Prostate gland (tissue), 2 donors: ENCODE measurements at regions of chr12 and their contacts with region 1.

Region 1: GRCh38 chr12:118061011-118061875 is at the start of gene WSB2:
- DNase-seq: peak; percentile 70
- H3K4me3 ChIP-seq: peak within 1 kb of the TSS; percentile 81 to 89
- H3K27ac ChIP-seq: peak within 1 kb of the TSS; percentile 99
- H3K4me1 ChIP-seq: no peaks in the 10 kb centered on the region
- H3K27me3 ChIP-seq: no peaks in the 10 kb centered on the region
- CTCF ChIP-seq: no peak
- POLR2A ChIP-seq: no peak
- total RNA-seq, gene WSB2: 41.3 to 99.2 TPM

Region 2: DNA sequence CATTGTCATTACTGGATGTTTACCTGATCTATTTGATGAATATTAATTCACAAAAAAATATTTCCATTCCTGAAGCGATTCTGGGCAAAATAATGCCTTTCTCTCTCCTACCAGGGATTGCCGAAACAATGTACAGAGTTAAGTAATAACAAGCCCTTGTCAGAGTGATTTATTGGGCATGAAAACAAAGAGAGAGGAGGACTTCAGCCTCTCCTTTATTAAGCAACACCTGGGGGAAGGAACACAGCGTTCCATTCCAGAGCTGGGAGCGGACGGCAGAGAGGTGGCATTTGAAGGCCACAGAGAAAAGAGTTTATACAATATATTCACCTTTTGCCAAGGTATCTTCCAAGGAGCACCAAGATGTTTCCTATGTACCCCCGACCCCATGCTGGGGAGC is 258.2 kb before region 1 on chr12:
- intact Hi-C with region 1: no loop called
- DNase-seq: peak; percentile 92
- H3K4me3 ChIP-seq: no peak overlapping the region
- H3K27ac ChIP-seq: peak overlapping the region; percentile 66 to 80
- H3K4me1 ChIP-seq: peaks cover 3% of the 10 kb centered on the region
- H3K27me3 ChIP-seq: no peaks in the 10 kb centered on the region
- CTCF ChIP-seq: no peak
- POLR2A ChIP-seq: no peak

Region 3: GRCh38 chr12:118103604-118104382 is 42.5 kb after region 1 on chr12 and contains the start of gene VSIG10:
- intact Hi-C with region 1: loop called (anchors 5 kb)
- DNase-seq: peak; percentile 70
- H3K4me3 ChIP-seq: peak within 1 kb of the TSS; percentile 66 to 81
- H3K27ac ChIP-seq: peak within 1 kb of the TSS; percentile 83 to 89
- H3K4me1 ChIP-seq: no peaks in the 10 kb centered on the region
- H3K27me3 ChIP-seq: no peaks in the 10 kb centered on the region
- CTCF ChIP-seq: peak in 1 of 4 experiments; percentile 8
- POLR2A ChIP-seq: peak; percentile 81
- total RNA-seq, gene VSIG10: 39.8 to 49.5 TPM

Region 4: GRCh38 chr12:118900993-118901392 is 839.8 kb after region 1 on chr12:
- intact Hi-C with region 1: no loop called
- DNase-seq: no peak
- H3K4me3 ChIP-seq: no peak overlapping the region
- H3K27ac ChIP-seq: no peak overlapping the region
- H3K4me1 ChIP-seq: no peaks in the 10 kb centered on the region
- H3K27me3 ChIP-seq: no peaks in the 10 kb centered on the region
- CTCF ChIP-seq: no peak
- POLR2A ChIP-seq: no peak